Sigmoid colon (tissue), 7 donors: ENCODE measurements at regions of chr19 and their contacts with region 1.

Region 1: GRCh38 chr19:52734893-52735661 is at the start of gene ZNF611:
- DNase-seq: peak; percentile 99
- H3K4me3 ChIP-seq: peak within 1 kb of the TSS; percentile 61 to 89 (median 84)
- H3K27ac ChIP-seq: peak within 1 kb of the TSS; percentile 86 to 95 (median 92)
- H3K4me1 ChIP-seq: peaks cover 0 to 27% (median 19%) of the 10 kb centered on the region in 4 donors
- H3K27me3 ChIP-seq: no peaks in the 10 kb centered on the region
- CTCF ChIP-seq: peak; percentile 50 to 75 (median 63)
- EP300 ChIP-seq: peak in 1 of 4 donors; percentile 13
- POLR2A ChIP-seq: peak; percentile 75 to 91
- total RNA-seq, gene ZNF611: 5.4 to 10.8 (median 8.8) TPM

Region 2: GRCh38 chr19:52637718-52638585 is 97.1 kb before region 1 on chr19 and contains the start of gene ZNF83:
- intact Hi-C with region 1: loop called (anchors 10 kb)
- DNase-seq: peak; percentile 98
- H3K4me3 ChIP-seq: peak within 1 kb of the TSS; percentile 63 to 73 (median 67)
- H3K27ac ChIP-seq: peak within 1 kb of the TSS; percentile 74 to 87 (median 84)
- H3K4me1 ChIP-seq: peaks cover 0 to 15% (median 14%) of the 10 kb centered on the region in 4 donors
- H3K27me3 ChIP-seq: no peaks in the 10 kb centered on the region
- CTCF ChIP-seq: no peak
- EP300 ChIP-seq: no peak
- POLR2A ChIP-seq: peak in 1 of 2 donors; percentile 44
- total RNA-seq, gene ZNF83: 49.2 to 96.7 (median 55.9) TPM

Region 3: DNA sequence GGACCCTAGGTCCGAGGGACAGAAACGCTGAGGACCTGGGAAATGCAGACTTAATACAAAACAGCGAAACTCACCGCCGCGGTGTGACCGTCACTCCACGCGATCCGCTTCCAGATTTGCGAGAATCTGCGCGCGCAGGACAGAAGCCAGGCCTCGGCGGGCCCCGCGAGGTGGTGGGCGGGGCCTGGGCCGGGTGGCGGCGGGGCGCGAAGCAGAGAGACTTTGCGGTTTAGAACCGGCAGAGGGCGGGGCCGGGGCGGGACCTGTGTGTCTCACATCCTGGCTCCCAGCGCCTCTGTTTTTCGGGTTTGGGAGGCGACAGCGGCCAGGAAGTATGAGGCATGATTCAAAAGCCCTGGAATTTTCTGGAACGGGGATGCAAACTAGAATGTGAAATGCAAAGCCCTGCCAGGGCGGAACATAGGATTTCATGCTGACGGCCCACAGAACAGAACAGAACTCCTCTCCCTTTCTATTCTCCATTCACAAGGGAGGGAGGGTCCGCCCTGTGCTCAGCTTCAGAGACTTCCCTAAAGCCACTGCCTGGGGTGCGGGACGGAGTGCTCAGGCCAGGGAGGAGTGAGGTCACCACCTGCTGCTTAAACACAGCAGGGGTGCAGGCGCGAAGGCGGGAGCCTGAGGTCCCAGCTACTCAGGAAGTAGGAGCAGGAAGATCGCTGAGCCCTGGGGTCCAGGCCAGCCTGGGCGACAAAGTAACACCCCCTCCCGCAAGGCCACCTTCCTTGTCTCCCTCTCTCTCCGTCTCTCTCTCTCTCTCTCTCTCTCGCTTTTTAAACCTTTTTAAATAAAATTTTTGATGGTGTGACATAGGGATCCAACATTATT is 44.5 kb before region 1 on chr19:
- intact Hi-C with region 1: loop called (anchors 5 kb)
- DNase-seq: peak; percentile 98
- H3K4me3 ChIP-seq: peak overlapping the region; percentile 59 to 71 (median 64)
- H3K27ac ChIP-seq: peak overlapping the region; percentile 85 to 91 (median 88)
- H3K4me1 ChIP-seq: peaks cover 0 to 22% (median 19%) of the 10 kb centered on the region in 4 donors
- H3K27me3 ChIP-seq: no peaks in the 10 kb centered on the region
- CTCF ChIP-seq: peak in 3 of 4 experiments; percentile 18 to 49 (median 33)
- EP300 ChIP-seq: no peak
- POLR2A ChIP-seq: peak; percentile 60 to 73

Region 4: DNA sequence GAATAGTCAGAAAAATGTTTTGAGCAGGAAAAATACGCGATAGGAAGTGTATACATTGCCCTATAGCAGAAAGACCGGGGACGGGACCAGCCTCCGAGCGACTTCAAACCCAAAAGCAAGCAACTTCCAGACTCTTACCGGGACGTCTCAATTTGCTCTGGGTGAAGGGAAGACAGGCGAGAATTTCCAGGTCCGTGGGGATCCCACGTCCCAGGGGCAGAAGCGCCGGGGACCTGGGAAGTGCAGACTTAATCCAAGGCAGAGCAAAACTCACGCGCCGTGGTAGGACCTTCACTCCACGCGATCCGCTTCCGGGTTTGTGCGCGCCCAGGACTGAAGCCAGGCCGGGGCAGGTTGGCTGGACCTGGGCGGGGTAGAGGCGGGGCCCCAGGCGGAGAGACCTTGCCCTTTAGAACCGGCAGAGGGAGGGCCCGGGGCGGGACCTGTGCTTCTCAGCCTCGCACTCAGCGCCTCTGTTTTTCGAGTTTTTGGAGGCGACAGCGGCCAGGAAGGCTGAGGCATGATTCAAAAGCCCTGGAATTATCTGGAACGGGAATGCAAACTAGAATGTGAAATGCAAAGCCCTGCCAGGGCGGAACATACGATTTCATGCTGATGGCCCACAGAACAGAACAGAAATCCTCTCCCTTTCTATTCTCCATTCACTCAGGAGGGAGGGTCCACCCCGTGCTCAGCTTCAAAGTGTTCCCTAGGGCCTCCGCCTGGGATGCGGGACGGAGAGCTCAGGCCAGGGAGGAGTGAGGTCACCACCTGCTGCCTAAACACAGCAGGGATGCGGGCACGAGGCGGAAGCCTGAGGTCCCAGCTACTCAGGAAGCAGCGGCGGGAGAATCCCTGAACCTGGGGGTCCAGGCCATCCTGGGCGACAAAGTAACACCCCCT is 51.6 kb after region 1 on chr19 and contains the start of gene ZNF600:
- intact Hi-C with region 1: loop called (anchors 2 kb)
- DNase-seq: peak; percentile 96
- H3K4me3 ChIP-seq: peak within 1 kb of the TSS; percentile 42 to 68 (median 66)
- H3K27ac ChIP-seq: peak within 1 kb of the TSS; percentile 73 to 86 (median 82)
- H3K4me1 ChIP-seq: peaks cover 0 to 18% (median 13%) of the 10 kb centered on the region in 4 donors
- H3K27me3 ChIP-seq: no peaks in the 10 kb centered on the region
- CTCF ChIP-seq: peak in 3 of 4 experiments; percentile 29 to 39 (median 36)
- EP300 ChIP-seq: no peak
- POLR2A ChIP-seq: peak; percentile 23 to 32
- total RNA-seq, gene ZNF600: 6.8 to 9.4 (median 8.2) TPM

Region 5: GRCh38 chr19:52897144-52897935 is 162.3 kb after region 1 on chr19 and contains the start of gene ZNF320:
- intact Hi-C with region 1: loop called (anchors 2 kb)
- DNase-seq: peak; percentile 98
- H3K4me3 ChIP-seq: peak within 1 kb of the TSS; percentile 61 to 81 (median 72)
- H3K27ac ChIP-seq: peak within 1 kb of the TSS; percentile 87 to 96 (median 92)
- H3K4me1 ChIP-seq: peaks cover 0 to 19% (median 17%) of the 10 kb centered on the region in 4 donors
- H3K27me3 ChIP-seq: no peaks in the 10 kb centered on the region
- CTCF ChIP-seq: no peak
- EP300 ChIP-seq: no peak
- POLR2A ChIP-seq: peak; percentile 33 to 73
- total RNA-seq, gene ZNF320: 9.0 to 21.8 (median 15.0) TPM